OCI-LY7 (cell line): ENCODE measurements at regions of chr5 and their contacts with region 1.

Region 1: DNA sequence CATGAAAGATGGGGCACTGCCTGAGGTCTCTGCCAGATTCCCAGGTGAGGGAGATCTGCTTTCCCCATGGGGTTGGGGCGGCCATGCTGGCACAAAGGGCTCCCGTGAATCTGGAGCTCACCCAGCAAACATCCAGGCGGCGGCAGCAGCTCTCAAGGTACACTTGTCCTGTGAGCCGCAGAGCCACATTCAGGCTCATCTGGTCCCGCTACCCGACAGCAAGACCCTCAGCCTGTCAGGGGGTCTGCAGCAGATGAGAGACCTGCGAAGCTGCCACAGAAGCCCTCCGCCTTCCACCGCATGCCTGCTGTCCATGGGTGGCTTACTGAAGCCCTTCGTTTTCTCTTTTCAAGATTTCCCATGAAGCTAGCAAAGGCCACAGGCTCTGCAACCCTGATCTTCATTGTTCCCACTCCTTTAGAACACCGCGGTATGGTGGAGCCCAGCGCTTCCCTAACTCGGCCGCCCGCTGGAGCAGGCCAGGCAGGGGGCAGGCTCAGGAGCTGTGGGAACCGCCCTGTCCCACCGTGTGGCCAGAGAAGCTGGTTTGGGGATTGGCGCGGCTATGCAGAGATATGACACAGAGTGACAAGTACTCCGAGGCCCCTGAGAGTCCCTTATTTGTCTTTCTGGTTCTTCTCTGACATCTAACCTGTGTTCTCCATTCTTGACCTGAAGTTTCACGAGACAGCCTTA is 8.8 kb downstream of the LRRC14B start:
- DNase-seq: no peak
- H3K4me3 ChIP-seq: peak overlapping the region; percentile 51
- H3K27ac ChIP-seq: peak overlapping the region; percentile 93
- H3K4me1 ChIP-seq: peaks cover 57% of the 10 kb centered on the region
- CTCF ChIP-seq: no peak

Region 2: DNA sequence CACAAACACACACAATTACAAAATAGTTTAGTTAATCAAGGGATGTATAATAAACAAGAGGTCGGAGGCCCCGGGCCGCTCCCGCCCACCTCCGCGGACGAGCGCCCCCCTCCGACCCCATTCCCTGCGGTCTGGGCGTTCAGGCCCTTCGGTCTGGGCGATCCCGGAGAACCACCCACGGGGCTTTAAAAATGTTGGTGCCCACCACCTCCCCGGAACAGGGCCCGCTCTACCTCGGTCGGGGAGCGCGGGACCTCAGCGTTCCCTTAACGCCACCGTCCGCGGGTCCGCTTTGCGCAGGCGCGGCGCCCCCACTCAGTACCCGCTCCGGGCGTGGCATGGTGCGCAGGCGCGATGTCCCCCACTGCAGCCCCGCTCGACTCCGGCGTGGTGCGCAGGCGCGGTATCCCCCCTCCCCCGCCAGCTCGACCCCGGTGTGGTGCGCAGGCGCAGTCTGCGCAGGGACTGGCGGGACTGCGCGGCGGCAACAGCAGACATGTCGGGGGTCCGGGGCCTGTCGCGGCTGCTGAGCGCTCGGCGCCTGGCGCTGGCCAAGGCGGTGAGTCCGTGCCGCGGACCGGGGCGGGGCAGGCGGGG is 17.9 kb after region 1 on chr5 and contains the starts of genes CCDC127 and SDHA:
- CTCF ChIA-PET with region 1: interaction called, 5 read pairs
- POLR2A ChIA-PET with region 1: interaction called, 4 read pairs
- intact Hi-C with region 1: loop called (anchors 1 kb)
- DNase-seq: peak; percentile 96
- H3K4me3 ChIP-seq: peak within 1 kb of the TSS; percentile 94
- H3K27ac ChIP-seq: peak within 1 kb of the TSS; percentile 66
- H3K4me1 ChIP-seq: peaks cover 48% of the 10 kb centered on the region
- CTCF ChIP-seq: peak; percentile 77
- total RNA-seq, gene CCDC127: 6.0 and 10.8 TPM in 2 replicates
- total RNA-seq, gene SDHA: 147 and 151 TPM in 2 replicates

Region 3: GRCh38 chr5:543825-544674 is 344.0 kb after region 1 on chr5:
- CTCF ChIA-PET with region 1: no interaction called
- POLR2A ChIA-PET with region 1: no interaction called
- intact Hi-C with region 1: no loop called
- DNase-seq: peak; percentile 90
- H3K4me3 ChIP-seq: peak overlapping the region; percentile 33
- H3K27ac ChIP-seq: peak overlapping the region; percentile 48
- H3K4me1 ChIP-seq: peaks cover 16% of the 10 kb centered on the region
- CTCF ChIP-seq: no peak